WTC11 (cell line): ENCODE measurements at regions of chr21 and their contacts with region 1.

Region 1: GRCh38 chr21:33360881-33361602 is 36.3 kb downstream of the IFNAR1 start:
- DNase-seq: peak; percentile 94
- ATAC-seq: peak; percentile 85
- H3K4me3 Mint-ChIP-seq: peak overlapping the region; percentile 37
- H3K27ac Mint-ChIP-seq: peak overlapping the region; percentile 85; the same call in 1 of the 2 replicates
- H3K4me1 Mint-ChIP-seq: peaks cover 18% of the 10 kb centered on the region
- H3K27me3 Mint-ChIP-seq: no peaks in the 10 kb centered on the region
- CTCF ChIP-seq: peak; percentile 83

Region 2: DNA sequence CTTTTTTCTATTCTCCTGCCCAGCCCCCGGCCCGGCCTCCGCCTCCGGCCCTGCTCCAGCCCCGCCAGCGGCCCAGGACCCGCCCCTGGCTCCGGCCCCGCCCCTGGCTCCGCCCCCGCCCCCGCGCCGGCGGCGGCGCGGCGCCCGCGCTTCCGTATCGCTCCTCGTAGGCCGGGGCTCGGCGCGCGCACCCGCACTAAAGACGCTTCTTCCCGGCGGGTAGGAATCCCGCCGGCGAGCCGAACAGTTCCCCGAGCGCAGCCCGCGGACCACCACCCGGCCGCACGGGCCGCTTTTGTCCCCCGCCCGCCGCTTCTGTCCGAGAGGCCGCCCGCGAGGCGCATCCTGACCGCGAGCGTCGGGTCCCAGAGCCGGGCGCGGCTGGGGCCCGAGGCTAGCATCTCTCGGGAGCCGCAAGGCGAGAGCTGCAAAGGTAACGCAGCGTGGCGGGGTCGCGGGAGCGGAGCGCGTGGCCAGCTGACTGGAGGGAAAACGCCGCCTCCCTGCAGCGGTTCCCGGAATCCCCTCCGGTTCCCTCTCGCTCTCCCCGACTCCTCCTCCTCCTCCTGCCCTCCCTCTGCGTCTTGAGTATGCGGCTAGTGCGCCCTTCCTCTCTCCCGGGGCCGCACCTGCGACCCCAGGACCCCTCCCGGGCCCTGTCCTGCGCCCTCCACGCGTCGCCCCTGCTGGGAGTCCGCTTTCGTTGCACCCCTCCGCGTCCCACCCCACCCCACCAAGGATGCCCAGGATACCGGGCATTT is 131.1 kb before region 1 on chr21 and contains the start of gene IFNAR2:
- CTCF ChIA-PET with region 1: interaction called, 14 read pairs
- POLR2A ChIA-PET with region 1: no interaction called
- DNase-seq: peak; percentile 79
- ATAC-seq: peak; percentile 85
- H3K4me3 Mint-ChIP-seq: peak within 1 kb of the TSS; percentile 81
- H3K27ac Mint-ChIP-seq: 0 out of 2 replicates have a peak within 1 kb of the TSS, but pooled peaks have one; percentile 60
- H3K4me1 Mint-ChIP-seq: peaks cover 38% of the 10 kb centered on the region
- H3K27me3 Mint-ChIP-seq: peaks cover 12% of the 10 kb centered on the region
- CTCF ChIP-seq: no peak
- total RNA-seq, gene IFNAR2: 13.3 to 19.1 TPM (median 16.4 TPM) in 3 replicates

Region 3: GRCh38 chr21:33324291-33325221 is 36.5 kb before region 1 on chr21 and contains the start of gene IFNAR1:
- CTCF ChIA-PET with region 1: interaction called, 26 read pairs
- POLR2A ChIA-PET with region 1: interaction called, 17 read pairs
- DNase-seq: peak; percentile 94
- ATAC-seq: peak; percentile 92
- H3K4me3 Mint-ChIP-seq: no peak within 1 kb of the TSS
- H3K27ac Mint-ChIP-seq: no peak within 1 kb of the TSS
- H3K4me1 Mint-ChIP-seq: no peaks in the 10 kb centered on the region
- H3K27me3 Mint-ChIP-seq: no peaks in the 10 kb centered on the region
- CTCF ChIP-seq: no peak
- total RNA-seq, gene IFNAR1: 12.2 to 14.6 TPM (median 13.2 TPM) in 3 replicates

Region 4: DNA sequence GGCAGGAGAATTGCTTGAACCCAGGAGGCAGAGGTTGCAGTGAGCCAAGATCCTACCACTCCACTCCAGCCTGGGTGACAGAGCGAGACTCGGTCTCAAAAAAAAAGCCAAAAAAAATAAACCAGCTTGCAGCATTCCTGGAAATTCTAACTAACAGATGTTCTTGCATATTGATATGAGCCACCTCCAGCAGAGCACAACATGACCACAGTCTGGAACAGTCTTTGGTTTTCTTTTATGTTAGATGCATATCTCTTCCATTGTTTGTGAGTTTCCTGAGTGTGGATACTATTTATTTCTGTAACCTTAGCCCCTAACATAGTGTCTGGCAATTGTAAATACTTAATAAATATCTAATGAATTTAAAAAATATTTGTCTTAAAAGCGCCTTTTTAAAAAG is 12.3 kb before region 1 on chr21:
- CTCF ChIA-PET with region 1: interaction called, 33 read pairs
- POLR2A ChIA-PET with region 1: no interaction called
- DNase-seq: no peak
- ATAC-seq: no peak
- H3K4me3 Mint-ChIP-seq: no peak overlapping the region
- H3K27ac Mint-ChIP-seq: no peak overlapping the region
- H3K4me1 Mint-ChIP-seq: no peaks in the 10 kb centered on the region
- H3K27me3 Mint-ChIP-seq: no peaks in the 10 kb centered on the region
- CTCF ChIP-seq: no peak

Region 5: GRCh38 chr21:33386222-33386784 is 25.3 kb after region 1 on chr21:
- CTCF ChIA-PET with region 1: interaction called, 25 read pairs
- POLR2A ChIA-PET with region 1: no interaction called
- DNase-seq: peak; percentile 50
- ATAC-seq: peak; percentile 72
- H3K4me3 Mint-ChIP-seq: no peak overlapping the region
- H3K27ac Mint-ChIP-seq: no peak overlapping the region
- H3K4me1 Mint-ChIP-seq: peaks cover 11% of the 10 kb centered on the region
- H3K27me3 Mint-ChIP-seq: no peaks in the 10 kb centered on the region; the same call in 1 of the 2 replicates
- CTCF ChIP-seq: peak; percentile 28

Region 6: GRCh38 chr21:33441489-33442477 is 80.7 kb after region 1 on chr21:
- CTCF ChIA-PET with region 1: interaction called, 28 read pairs
- POLR2A ChIA-PET with region 1: no interaction called
- DNase-seq: no peak
- ATAC-seq: no peak
- H3K4me3 Mint-ChIP-seq: no peak overlapping the region
- H3K27ac Mint-ChIP-seq: peak overlapping the region; percentile 27; the same call in 1 of the 2 replicates
- H3K4me1 Mint-ChIP-seq: no peaks in the 10 kb centered on the region
- H3K27me3 Mint-ChIP-seq: no peaks in the 10 kb centered on the region
- CTCF ChIP-seq: no peak